SK-N-SH (cell line): ENCODE measurements at regions of chr11 and their contacts with region 1.

Region 1: DNA sequence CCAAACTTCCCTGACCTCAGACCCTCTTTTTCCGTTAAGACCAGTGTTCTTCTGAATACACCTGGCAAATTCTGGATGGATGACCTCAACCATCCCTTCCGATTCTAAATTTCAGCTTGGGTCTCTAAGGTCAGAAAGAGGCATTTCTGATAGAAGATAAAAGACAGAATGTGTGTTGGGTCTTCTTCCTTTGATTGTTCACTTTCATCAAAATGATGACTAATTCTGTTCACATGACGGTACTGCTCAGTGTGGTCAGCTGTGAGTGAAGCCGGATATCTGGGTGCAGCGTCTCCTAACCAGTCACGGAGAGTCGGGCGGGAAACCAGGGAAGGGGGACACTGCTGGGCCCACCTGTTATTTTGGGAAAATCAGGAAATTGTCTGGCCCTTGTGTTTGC is 151.6 kb upstream of the NAV2 start:
- DNase-seq: no peak
- H3K4me3 ChIP-seq: no peak overlapping the region
- H3K27ac ChIP-seq: peak overlapping the region in 1 of 2 experiments; percentile 96; a peak in 2 of 4 replicates
- H3K4me1 ChIP-seq: peaks cover 0 to 64% of the 10 kb centered on the region in 2 experiments; a peak in 2 of 4 replicates
- H3K27me3 ChIP-seq: no peaks in the 10 kb centered on the region
- CTCF ChIP-seq: no peak
- EP300 ChIP-seq: no peak
- RAD21 ChIP-seq: no peak

Region 2: DNA sequence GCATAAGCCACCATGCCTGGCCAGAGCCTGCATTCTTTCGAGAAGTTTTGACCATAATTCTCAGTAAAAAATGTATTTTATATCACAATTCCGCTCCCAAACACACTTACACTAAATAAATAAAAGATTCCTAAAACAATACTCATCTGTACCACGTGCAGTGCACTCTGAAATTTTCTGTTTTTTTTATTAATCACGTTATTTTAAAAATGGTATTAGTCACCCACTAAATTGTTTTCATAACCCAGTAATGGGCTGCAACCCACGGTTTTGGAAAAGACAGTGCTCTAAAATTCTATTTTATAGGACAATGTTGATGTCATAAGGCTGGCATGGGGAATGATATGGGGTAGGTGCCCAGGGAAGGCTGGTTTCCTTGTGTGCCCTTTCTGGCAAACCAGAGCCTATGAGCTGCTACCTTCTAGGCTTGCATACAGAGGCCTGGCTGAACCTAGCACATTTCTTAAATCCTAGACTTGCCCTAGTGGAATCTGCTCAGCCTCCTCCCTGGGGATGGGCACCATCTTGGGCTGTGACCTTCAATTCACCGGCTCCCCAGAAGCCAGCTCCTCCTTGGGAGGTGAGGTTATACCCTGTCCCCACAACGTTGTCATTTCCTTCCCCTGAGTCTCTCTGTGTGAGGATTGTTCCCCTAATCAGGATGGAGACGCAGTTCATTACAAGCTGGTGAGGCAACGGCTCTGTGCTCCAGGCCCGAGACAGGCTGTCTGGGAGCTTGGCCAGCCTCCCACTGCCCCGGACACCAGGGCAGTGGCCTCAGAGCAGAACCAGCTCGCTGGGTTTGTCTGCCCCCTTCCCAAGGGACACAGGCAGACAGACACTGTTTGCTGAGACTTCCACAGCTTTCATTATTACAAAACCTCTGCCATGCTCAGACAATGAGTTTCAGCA is 35.1 kb after region 1 on chr11:
- CTCF ChIA-PET with region 1: interaction called, 18 read pairs
- POLR2A ChIA-PET with region 1: no interaction called
- DNase-seq: peak; percentile 74
- H3K4me3 ChIP-seq: peak overlapping the region; percentile 37 to 42; a peak in 3 of 4 replicates
- H3K27ac ChIP-seq: peak overlapping the region; percentile 96 to 100
- H3K4me1 ChIP-seq: peaks cover 10 to 57% of the 10 kb centered on the region in 2 experiments
- H3K27me3 ChIP-seq: no peaks in the 10 kb centered on the region
- CTCF ChIP-seq: no peak
- EP300 ChIP-seq: peak; percentile 71 to 88
- RAD21 ChIP-seq: peak; percentile 13; the same call in 1 of the 2 replicates

Region 3: GRCh38 chr11:19698493-19699292 is 137.7 kb after region 1 on chr11:
- CTCF ChIA-PET with region 1: interaction called, 13 read pairs
- POLR2A ChIA-PET with region 1: interaction called, 4 read pairs
- DNase-seq: no peak
- H3K4me3 ChIP-seq: no peak overlapping the region
- H3K27ac ChIP-seq: no peak overlapping the region
- H3K4me1 ChIP-seq: peaks cover 7 to 31% of the 10 kb centered on the region in 2 experiments; a peak in 2 of 4 replicates
- H3K27me3 ChIP-seq: no peaks in the 10 kb centered on the region
- CTCF ChIP-seq: no peak
- EP300 ChIP-seq: no peak
- RAD21 ChIP-seq: no peak

Region 4: GRCh38 chr11:19705936-19706335 is 144.9 kb after region 1 on chr11:
- CTCF ChIA-PET with region 1: interaction called, 91 read pairs
- POLR2A ChIA-PET with region 1: interaction called, 9 read pairs
- DNase-seq: no peak
- H3K4me3 ChIP-seq: peak overlapping the region in 1 of 2 experiments; percentile 33; a peak in 2 of 4 replicates
- H3K27ac ChIP-seq: peak overlapping the region; percentile 66 to 98
- H3K4me1 ChIP-seq: peaks cover 31 to 51% of the 10 kb centered on the region in 2 experiments
- H3K27me3 ChIP-seq: no peaks in the 10 kb centered on the region
- CTCF ChIP-seq: no peak
- EP300 ChIP-seq: no peak
- RAD21 ChIP-seq: no peak

Region 5: DNA sequence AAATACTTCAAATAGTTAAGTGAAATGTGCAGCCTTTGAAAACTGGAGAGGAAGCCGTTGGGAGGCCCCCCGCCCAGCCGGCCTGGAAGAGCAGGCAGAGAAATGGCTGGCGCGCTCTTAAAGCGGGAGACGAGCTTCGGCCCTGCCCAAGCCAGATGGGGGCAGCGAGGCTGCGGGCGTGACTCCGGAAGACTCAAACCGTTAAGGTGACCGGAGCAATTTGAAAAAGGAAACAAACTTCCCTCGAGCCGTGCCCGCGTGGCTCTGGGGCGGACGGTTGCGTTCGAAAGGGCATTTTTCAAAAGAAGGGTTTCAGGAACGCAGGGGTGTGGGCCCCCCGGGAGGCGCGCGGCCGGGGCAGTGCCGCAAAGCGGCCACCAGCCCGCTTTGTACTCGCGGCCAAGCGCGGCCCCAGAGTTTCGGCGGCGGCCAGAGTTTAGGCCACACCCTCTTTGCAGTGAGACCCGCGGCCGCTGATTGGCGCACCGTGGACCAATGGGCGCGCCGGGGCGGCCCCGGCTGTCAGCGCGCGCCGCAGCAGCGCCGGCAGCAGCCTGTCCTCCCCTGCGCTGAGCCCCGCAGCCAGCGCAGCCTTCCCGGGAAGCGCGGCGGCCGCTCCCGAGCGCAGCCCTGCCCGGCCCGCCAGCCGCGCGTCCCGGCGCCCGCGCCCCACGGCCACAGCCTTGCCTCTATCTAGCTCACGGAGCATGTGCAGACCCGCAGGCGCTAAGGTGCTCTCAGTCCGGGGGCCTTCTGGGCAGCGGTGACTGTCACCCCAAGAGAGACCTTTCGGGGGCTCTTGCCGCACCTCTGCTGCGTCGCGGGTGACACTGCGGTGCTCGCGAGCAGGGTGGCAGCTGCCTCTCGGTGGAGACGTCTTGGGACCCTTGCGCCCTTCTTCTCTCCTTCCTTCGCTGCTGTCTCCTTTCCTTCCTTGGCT is 151.5 kb after region 1 on chr11 and contains the start of gene NAV2:
- CTCF ChIA-PET with region 1: interaction called, 91 read pairs
- POLR2A ChIA-PET with region 1: interaction called, 10 read pairs
- DNase-seq: peak; percentile 93
- H3K4me3 ChIP-seq: peak within 1 kb of the TSS; percentile 80
- H3K27ac ChIP-seq: peak within 1 kb of the TSS; percentile 94 to 99
- H3K4me1 ChIP-seq: peaks cover 8 to 49% of the 10 kb centered on the region in 2 experiments
- H3K27me3 ChIP-seq: no peaks in the 10 kb centered on the region
- CTCF ChIP-seq: no peak
- EP300 ChIP-seq: 0 out of 4 replicates have a peak, but pooled peaks of 1 of the 2 experiments have one; percentile 54
- RAD21 ChIP-seq: no peak; the same call in 1 of the 2 replicates
- polyA plus RNA-seq, gene NAV2: 19.0 and 26.2 TPM in 2 replicates